ENCODE measurements at regions of chr18 and their contacts with region 1.

Region 1: DNA sequence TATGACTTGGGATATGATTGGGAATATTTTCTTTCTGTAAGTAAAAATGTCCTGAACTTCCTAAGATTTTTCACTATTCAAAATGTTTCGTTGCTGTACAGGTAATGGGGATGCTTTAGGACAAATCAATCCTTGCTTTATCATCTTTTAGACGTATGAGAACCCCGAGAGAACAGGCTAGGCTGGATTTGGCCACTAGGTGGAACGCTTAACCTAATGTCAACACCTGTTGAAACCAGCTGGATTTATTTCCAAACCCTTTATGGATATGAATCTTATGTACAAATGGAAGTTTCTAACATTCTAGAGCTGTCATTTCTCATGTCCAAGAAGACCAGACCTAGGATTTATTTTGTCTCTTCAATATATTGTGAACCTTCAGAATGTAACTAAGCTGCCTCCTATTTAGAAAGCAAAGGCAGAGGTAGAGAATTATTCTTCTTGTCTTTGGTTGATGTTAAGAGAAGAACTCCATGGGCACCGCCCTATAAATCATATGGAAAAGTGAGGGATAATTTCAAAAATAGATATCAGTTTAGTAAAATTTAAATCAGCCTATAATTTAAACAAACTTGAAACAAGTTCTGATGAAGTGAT is 96.7 kb downstream of the PMAIP1 start:
- ATAC-seq: peak in 4 of 8 experiments; percentile 44 to 87 (median 85)
- H3K4me3 ChIP-seq: no peak overlapping the region
- H3K27ac ChIP-seq: no peak overlapping the region
- H3K4me1 ChIP-seq: no peaks in the 10 kb centered on the region

Region 2: DNA sequence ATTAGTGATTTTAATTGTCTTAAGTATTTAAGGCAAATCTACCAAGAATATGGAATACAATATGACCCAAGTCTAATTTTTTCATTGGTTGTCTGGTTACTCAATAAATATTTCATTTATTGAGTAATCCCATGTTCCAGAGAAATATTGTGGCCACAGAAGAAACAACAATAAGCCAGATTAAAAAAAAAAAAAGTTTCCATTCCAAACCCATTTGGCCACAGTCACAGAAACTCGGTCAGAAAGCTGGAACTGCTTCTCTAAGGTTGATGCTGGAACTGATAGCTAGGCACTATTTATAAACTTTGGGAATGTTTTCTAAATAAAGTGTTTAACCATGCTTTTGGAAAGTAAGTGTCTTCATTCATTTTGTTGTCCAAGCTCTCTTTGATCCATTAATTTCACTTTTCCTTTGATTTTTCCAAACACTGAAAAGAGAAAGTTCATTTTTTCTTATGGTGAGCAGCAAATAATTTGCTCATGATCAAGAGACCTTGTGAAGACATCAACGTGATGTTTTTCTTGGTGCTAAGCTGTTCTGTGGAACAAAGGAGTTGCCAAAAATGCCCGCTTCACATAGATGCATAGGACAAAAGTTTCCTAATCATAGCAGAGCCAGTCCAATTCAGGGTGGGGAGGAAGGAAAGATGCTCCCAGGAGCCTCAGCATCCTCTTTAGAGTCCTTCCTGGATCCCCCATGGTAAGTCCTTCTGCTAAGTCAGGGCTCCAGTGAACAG is 227.2 kb before region 1 on chr18:
- in situ Hi-C with region 1: no loop called
- ATAC-seq: no peak
- H3K4me3 ChIP-seq: no peak overlapping the region
- H3K27ac ChIP-seq: no peak overlapping the region
- H3K4me1 ChIP-seq: no peaks in the 10 kb centered on the region

Region 3: GRCh38 chr18:60549338-60549960 is 553.0 kb after region 1 on chr18:
- in situ Hi-C with region 1: loop called in 7 of 9 experiments (anchors 10 to 25 kb)
- ATAC-seq: peak in 3 of 8 experiments; percentile 33 to 49 (median 34)
- H3K4me3 ChIP-seq: no peak overlapping the region
- H3K27ac ChIP-seq: no peak overlapping the region
- H3K4me1 ChIP-seq: no peaks in the 10 kb centered on the region

Region 4: DNA sequence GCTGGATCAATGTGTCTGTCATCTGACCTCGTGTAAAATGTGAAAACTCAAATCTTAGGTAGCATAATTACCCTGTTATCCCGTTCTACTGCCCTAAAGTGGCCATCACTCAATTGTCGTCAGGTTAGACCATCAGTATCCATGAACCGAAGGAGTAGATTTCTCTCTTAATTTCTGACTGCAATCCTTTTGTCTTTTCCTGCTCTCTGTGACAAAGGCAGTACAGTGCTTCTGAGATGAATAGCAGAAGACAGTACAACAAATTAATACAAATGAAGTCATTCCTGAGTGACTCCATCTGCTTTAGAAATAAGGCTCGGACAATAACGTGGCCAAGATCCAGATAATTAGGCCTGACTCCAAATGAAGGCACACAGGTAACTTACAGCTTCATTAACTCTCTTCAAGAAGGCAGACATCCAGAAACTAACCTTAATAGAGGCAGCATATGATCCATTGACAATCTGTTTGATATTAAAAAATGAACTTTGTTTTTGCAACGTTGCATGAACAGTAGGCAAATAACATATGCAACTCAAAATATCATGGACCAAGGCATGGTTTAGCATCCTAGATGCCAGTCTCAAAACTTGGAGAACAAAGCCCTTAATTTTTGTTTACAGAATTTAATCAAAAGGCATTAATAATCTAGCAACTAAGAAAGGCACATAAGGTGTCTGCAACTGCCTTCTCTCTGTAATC is 1240.0 kb after region 1 on chr18:
- in situ Hi-C with region 1: no loop called
- ATAC-seq: peak in 5 of 8 experiments; percentile 56 to 89 (median 84)
- H3K4me3 ChIP-seq: no peak overlapping the region
- H3K27ac ChIP-seq: no peak overlapping the region
- H3K4me1 ChIP-seq: peaks cover 8 to 25% of the 10 kb centered on the region in 2 donors

Measured in motor neuron (in vitro differentiated cells).